ENCODE measurements at regions of chr4 and their contacts with region 1.

Region 1: GRCh38 chr4:140012688-140013486 is 141.1 kb downstream of the MAML3 start:
- DNase-seq: peak; percentile 71
- H3K4me3 Mint-ChIP-seq: no peak overlapping the region
- H3K27ac Mint-ChIP-seq: peak overlapping the region; percentile 15
- H3K4me1 Mint-ChIP-seq: peaks cover 16% of the 10 kb centered on the region
- H3K27me3 Mint-ChIP-seq: no peaks in the 10 kb centered on the region
- CTCF ChIP-seq: peak; percentile 48

Region 2: DNA sequence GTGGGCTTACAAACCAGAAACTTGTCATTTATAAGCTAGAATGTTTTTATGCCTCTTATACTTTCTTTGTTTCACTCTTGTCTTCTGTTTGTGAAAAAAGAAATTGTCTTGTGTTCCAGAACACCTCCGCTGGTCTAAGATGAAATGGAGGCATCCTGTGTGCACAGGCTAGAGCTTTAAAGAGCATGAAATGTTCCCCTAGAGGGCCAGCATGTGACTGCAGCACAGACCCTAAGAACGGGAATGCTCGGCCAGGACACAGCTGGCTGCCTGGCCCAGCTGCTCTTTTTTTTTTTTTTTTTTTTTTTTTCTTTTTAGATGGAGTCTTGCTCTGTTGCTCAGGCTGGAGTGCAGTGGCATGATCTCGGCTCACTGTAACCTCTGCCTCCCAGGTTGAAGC is 490.4 kb before region 1 on chr4:
- CTCF ChIA-PET with region 1: no interaction called
- intact Hi-C with region 1: no loop called
- DNase-seq: no peak
- H3K4me3 Mint-ChIP-seq: no peak overlapping the region
- H3K27ac Mint-ChIP-seq: no peak overlapping the region
- H3K4me1 Mint-ChIP-seq: no peaks in the 10 kb centered on the region
- H3K27me3 Mint-ChIP-seq: no peaks in the 10 kb centered on the region
- CTCF ChIP-seq: no peak

Region 3: DNA sequence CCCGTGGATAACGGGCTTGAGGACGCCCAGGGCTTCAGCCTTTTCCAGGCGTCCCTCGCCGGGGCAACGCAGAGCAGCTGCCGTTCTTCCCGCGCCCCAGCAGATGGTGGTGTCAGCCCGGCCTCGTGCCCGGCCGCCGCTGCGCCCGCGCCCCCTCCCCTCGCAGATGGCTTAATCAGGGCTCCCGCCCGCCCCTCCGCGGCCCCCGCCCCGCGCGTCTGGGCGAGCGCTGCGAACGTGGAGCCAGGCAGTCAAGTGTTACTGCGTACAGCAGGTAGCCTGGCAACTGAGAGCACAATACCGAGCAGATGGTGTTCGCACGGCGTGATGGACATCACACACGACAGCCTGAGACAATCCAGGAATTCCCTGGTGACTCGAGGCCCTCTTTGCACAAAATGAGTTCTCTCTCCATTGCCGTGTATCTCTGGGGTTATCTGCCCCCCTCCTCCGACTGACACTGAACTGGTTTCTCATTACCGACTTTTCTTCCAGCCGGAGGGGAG is 278.0 kb before region 1 on chr4:
- CTCF ChIA-PET with region 1: no interaction called
- intact Hi-C with region 1: loop called (anchors 5 kb)
- DNase-seq: peak; percentile 61
- H3K4me3 Mint-ChIP-seq: peak overlapping the region; percentile 59
- H3K27ac Mint-ChIP-seq: no peak overlapping the region
- H3K4me1 Mint-ChIP-seq: no peaks in the 10 kb centered on the region
- H3K27me3 Mint-ChIP-seq: no peaks in the 10 kb centered on the region
- CTCF ChIP-seq: peak; percentile 62

Region 4: DNA sequence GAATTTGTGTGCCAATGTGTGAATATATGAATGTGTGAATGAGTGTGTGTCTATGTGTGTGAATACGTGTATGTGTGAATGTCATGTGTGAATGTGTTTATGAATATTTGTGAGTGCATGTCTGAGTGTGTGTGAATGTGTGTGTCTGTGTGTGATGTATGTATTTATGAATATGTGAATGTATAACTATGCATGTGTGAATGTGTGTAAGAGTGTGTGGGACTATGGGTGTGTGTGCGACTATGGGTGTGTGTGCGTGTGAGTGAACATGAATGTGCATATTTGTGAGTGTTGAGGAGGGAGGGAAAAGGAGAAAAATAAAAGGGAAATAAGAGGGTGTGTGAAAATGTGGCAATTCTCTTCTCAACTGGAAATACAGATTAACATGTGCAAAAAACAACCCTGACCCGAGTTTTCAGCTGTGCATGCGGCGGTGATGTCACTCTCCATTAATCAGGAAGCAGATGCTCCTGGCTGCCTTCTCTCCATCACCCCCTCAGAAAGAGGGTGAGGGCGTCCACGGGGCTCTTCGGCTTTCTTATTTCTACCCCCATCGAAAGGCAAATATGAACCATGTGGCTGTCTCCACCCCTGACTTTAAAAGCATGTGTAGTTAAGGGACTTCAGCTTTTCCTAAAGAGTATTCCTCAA is 78.7 kb before region 1 on chr4:
- CTCF ChIA-PET with region 1: no interaction called
- intact Hi-C with region 1: no loop called
- DNase-seq: no peak
- H3K4me3 Mint-ChIP-seq: no peak overlapping the region
- H3K27ac Mint-ChIP-seq: no peak overlapping the region
- H3K4me1 Mint-ChIP-seq: no peaks in the 10 kb centered on the region
- H3K27me3 Mint-ChIP-seq: no peaks in the 10 kb centered on the region
- CTCF ChIP-seq: no peak

Region 5: DNA sequence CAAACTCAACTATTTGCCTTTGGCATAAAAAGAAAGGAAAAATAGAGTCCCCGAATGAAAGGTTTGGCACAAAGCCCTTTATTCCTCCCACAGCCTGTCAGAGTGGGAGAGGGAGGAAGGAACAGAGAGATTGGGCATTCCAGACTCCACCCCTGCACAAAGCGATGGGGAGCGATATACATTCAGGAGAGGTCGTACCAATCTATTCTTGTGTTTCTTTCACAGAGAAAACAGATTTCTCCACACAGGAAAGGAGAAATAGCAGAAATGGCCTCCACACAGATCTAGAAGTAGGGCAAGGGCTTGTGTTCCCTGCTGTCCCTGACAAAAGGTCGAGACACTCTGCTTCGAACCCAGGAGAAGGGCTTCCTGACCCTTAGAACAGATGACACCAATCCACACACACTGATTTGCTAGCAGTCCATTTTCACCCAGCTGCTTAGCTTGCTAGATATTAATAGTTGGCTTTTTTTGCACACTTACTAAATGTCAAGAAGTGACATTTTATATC is 56.3 kb before region 1 on chr4:
- CTCF ChIA-PET with region 1: no interaction called
- intact Hi-C with region 1: no loop called
- DNase-seq: no peak
- H3K4me3 Mint-ChIP-seq: no peak overlapping the region
- H3K27ac Mint-ChIP-seq: no peak overlapping the region
- H3K4me1 Mint-ChIP-seq: no peaks in the 10 kb centered on the region
- H3K27me3 Mint-ChIP-seq: no peaks in the 10 kb centered on the region
- CTCF ChIP-seq: no peak

Region 6: DNA sequence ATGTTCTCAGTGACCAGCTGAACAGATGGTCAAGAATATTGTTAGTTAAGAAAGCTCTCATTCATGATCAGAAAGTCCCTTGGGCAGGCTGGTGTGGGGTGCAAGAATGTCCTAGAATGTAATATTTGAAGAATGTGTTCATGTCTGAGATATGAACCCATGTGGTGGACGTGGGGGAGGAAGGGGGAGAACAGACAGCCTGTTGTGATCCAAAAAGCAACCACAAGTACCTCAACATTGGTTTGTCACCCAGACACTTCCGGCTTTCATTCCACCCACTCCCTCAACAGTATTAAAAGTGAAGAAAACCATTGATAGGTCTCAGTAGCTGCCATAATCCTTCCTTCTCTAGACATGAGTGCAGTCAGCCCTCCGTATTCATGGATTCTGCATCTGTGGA is 58.9 kb after region 1 on chr4:
- CTCF ChIA-PET with region 1: no interaction called
- intact Hi-C with region 1: no loop called
- DNase-seq: peak; percentile 15
- H3K4me3 Mint-ChIP-seq: no peak overlapping the region
- H3K27ac Mint-ChIP-seq: no peak overlapping the region
- H3K4me1 Mint-ChIP-seq: peaks cover 23% of the 10 kb centered on the region
- H3K27me3 Mint-ChIP-seq: no peaks in the 10 kb centered on the region
- CTCF ChIP-seq: no peak

Region 7: DNA sequence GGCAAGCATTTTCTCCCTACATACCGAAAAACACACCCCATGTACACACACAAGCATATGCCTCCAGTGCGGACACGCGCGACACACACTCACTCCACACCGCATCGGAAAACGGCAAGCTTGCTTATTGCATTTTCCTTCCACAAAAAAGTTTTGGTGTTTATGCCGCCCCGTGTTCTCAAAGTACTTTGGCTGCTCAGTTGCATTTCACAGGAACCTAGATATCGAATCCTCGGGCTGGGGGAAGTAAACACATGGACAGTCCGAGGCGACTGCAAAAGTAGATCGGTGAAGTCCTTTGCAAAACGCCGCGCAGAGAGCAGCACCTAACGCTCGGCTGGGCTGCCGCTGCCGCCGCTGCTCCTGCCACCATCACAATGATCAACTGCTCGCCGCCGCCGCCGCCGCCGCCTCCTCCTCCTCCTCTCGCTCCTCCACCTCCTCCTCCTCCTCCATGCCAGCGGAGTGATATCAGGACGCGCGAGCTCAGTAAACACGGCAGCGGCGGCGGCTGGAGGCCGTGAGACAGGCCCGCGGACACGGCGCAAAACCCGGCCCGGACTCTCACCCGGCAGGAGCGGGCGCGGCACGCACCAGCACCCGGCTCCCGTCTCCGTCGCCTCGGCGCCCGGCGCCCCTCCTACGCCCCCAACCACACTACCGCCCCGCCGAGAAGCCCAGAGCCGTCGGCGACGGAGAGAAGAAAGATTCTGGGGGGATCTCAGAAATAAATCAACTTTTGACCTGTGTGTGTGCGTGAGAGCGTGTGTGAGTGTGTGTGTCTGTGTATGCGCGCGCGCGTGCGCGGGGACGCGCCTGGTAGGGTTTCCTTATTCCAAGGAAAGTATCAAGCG is 141.1 kb after region 1 on chr4 and contains the start of gene MAML3:
- CTCF ChIA-PET with region 1: interaction called, 4 read pairs
- intact Hi-C with region 1: loop called (anchors 1 kb)
- DNase-seq: peak; percentile 90
- H3K4me3 Mint-ChIP-seq: peak within 1 kb of the TSS; percentile 90
- H3K27ac Mint-ChIP-seq: peak within 1 kb of the TSS; percentile 73
- H3K4me1 Mint-ChIP-seq: no peaks in the 10 kb centered on the region
- H3K27me3 Mint-ChIP-seq: no peaks in the 10 kb centered on the region
- CTCF ChIP-seq: no peak
- total RNA-seq, gene MAML3: 3.8 and 4.0 TPM in 2 replicates

Region 8: DNA sequence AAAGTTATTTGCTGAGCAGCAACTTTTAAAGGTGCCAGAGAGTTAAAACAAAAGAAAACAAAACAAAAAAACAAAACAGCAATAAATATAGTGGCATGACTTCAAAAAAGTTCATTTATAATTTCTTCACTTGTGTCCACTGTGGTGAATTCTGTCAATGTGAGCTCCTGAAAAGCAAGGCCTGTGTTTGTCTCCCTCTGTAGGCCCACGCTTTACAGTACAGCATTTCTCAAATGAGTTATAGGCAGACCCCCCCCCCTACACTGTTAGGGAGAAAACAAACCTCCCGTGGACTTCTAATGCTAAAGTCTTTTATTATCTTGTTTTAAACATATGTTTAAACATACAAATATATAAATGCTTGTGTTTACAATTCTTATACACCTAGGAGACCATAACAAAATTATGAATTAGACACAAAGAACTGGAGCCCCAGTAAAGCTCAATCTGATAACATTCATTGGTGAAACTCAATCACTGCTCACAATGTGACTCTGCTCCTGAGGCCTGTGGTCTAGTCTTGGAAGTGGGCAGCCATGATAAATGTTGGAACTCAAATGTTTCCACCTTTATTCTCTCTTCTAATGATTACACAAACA is 313.6 kb after region 1 on chr4:
- CTCF ChIA-PET with region 1: interaction called, 6 read pairs
- intact Hi-C with region 1: loop called (anchors 1 kb)
- DNase-seq: peak; percentile 14
- H3K4me3 Mint-ChIP-seq: no peak overlapping the region
- H3K27ac Mint-ChIP-seq: no peak overlapping the region
- H3K4me1 Mint-ChIP-seq: peaks cover 5% of the 10 kb centered on the region
- H3K27me3 Mint-ChIP-seq: no peaks in the 10 kb centered on the region
- CTCF ChIP-seq: peak; percentile 32

Region 9: DNA sequence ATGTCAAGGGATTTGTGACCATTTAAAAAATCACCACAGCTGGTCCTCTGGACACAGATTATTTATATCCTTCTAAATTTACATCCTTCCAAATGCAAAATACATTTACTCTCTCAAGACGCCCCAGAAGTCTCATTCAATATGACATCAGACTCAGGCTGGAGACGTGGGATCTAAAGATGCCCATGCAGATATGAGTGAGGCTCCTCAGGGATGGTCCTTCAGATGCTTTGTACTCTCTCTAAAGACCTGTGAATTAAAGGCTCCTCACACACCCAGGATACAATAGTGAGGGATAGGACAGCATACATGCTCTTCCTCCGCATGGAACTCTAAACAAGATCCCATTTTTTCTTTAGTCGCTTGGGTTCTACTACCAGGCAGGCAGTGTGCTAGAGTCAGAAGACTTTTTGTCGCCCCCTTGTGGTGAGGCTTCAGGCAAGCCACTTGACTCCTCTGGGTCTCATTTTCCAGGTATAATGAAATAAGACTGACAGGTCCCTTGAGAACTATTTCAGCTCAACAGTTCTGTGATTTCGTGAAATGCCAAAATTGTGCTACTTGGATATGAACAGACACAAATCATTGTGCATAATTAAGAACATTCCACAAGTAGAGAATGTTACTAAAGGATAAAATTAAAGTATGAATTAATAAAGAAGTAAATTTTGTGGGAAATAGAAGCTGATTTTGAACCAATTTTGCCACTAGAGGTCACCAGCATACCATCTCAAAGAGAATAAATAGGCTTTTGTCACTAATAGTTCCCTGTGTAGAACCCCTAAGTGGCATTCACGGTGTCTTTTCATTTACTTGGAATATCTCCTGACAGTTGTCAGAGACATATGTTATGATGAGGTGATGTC is 346.9 kb after region 1 on chr4:
- CTCF ChIA-PET with region 1: interaction called, 12 read pairs
- intact Hi-C with region 1: loop called (anchors 1 kb)
- DNase-seq: peak; percentile 81
- H3K4me3 Mint-ChIP-seq: no peak overlapping the region
- H3K27ac Mint-ChIP-seq: no peak overlapping the region
- H3K4me1 Mint-ChIP-seq: peaks cover 23% of the 10 kb centered on the region
- H3K27me3 Mint-ChIP-seq: no peaks in the 10 kb centered on the region
- CTCF ChIP-seq: peak; percentile 58

Measured in Calu3 (cell line).